K562 (cell line): ENCODE measurements at regions of chr1 and their contacts with region 1.

Region 1: GRCh38 chr1:198088360-198089071 is 68.3 kb upstream of the NEK7 start:
- DNase-seq: peak in 2 of 4 experiments; percentile 53 to 61
- ATAC-seq: peak; percentile 85
- H3K4me3 ChIP-seq: no peak overlapping the region
- H3K27ac ChIP-seq: no peak overlapping the region; the same call in 2 of the 3 replicates
- H3K4me1 ChIP-seq: peaks cover 0 to 6% of the 10 kb centered on the region in 2 experiments; a peak in 2 of 5 replicates
- H3K27me3 ChIP-seq: no peaks in the 10 kb centered on the region
- CTCF ChIP-seq: peak; percentile 59 to 80 (median 61); a peak in 5 of 6 replicates
- EP300 ChIP-seq: no peak
- POLR2A ChIP-seq: no peak
- RAD21 ChIP-seq: peak; percentile 84 to 86

Region 2: GRCh38 chr1:198275597-198275996 is 187.1 kb after region 1 on chr1:
- CTCF ChIA-PET with region 1: no interaction called
- POLR2A ChIA-PET with region 1: no interaction called
- in situ Hi-C with region 1: no loop called
- intact Hi-C with region 1: loop called (anchors 5 kb)
- DNase-seq: no peak
- ATAC-seq: no peak
- H3K4me3 ChIP-seq: no peak overlapping the region
- H3K27ac ChIP-seq: no peak overlapping the region
- H3K4me1 ChIP-seq: no peaks in the 10 kb centered on the region; a peak in 2 of 5 replicates
- H3K27me3 ChIP-seq: no peaks in the 10 kb centered on the region
- CTCF ChIP-seq: peak in 1 of 3 experiments; percentile 33; a peak in 2 of 6 replicates
- EP300 ChIP-seq: no peak
- POLR2A ChIP-seq: no peak
- RAD21 ChIP-seq: no peak

Region 3: GRCh38 chr1:198359024-198359653 is 270.6 kb after region 1 on chr1:
- CTCF ChIA-PET with region 1: interaction called, 4 read pairs
- POLR2A ChIA-PET with region 1: no interaction called
- in situ Hi-C with region 1: no loop called
- intact Hi-C with region 1: loop called (anchors 2 kb)
- DNase-seq: peak in 1 of 4 experiments; percentile 36
- ATAC-seq: peak; percentile 75
- H3K4me3 ChIP-seq: no peak overlapping the region
- H3K27ac ChIP-seq: no peak overlapping the region
- H3K4me1 ChIP-seq: no peaks in the 10 kb centered on the region
- H3K27me3 ChIP-seq: no peaks in the 10 kb centered on the region
- CTCF ChIP-seq: peak; percentile 43 to 56 (median 47); a peak in 5 of 6 replicates
- EP300 ChIP-seq: no peak
- POLR2A ChIP-seq: no peak
- RAD21 ChIP-seq: peak; percentile 62 to 74